ENCODE measurements at regions of chr1 and their contacts with region 1.

Region 1: GRCh38 chr1:149917571-149918144 is at the start of gene SV2A:
- DNase-seq: peak in 1 of 2 experiments; percentile 72
- H3K4me3 ChIP-seq: peak within 1 kb of the TSS; percentile 85 to 99 (median 92)
- H3K27ac ChIP-seq: no peak within 1 kb of the TSS
- H3K4me1 ChIP-seq: peaks cover 4 to 19% (median 11%) of the 10 kb centered on the region in 4 experiments
- H3K27me3 ChIP-seq: no peaks in the 10 kb centered on the region
- CTCF ChIP-seq: no peak
- EP300 ChIP-seq: peak in 1 of 2 experiments; percentile 59; a peak in 1 of 3 replicates
- POLR2A ChIP-seq: peak in 1 of 2 experiments; percentile 50; a peak in 1 of 3 replicates
- RAD21 ChIP-seq: no peak
- total RNA-seq, gene SV2A: 51.8 and 52.9 TPM in 2 replicates

Region 2: GRCh38 chr1:149927503-149928387 is 10.1 kb after region 1 on chr1 and contains the start of gene SF3B4:
- CTCF ChIA-PET with region 1: interaction called, 4 read pairs
- POLR2A ChIA-PET with region 1: interaction called, 11 read pairs
- DNase-seq: peak in 1 of 2 experiments; percentile 92
- H3K4me3 ChIP-seq: peak within 1 kb of the TSS; percentile 85 to 95 (median 94)
- H3K27ac ChIP-seq: peak within 1 kb of the TSS; percentile 90
- H3K4me1 ChIP-seq: peaks cover 0 to 8% (median 4%) of the 10 kb centered on the region in 4 experiments; a peak in 4 of 7 replicates
- H3K27me3 ChIP-seq: no peaks in the 10 kb centered on the region
- CTCF ChIP-seq: no peak
- EP300 ChIP-seq: no peak
- POLR2A ChIP-seq: peak; percentile 92 to 93
- RAD21 ChIP-seq: 0 out of 4 replicates have a peak, but pooled peaks of 1 of the 2 experiments have one; percentile 5
- total RNA-seq, gene SF3B4: 119 and 122 TPM in 2 replicates

Region 3: DNA sequence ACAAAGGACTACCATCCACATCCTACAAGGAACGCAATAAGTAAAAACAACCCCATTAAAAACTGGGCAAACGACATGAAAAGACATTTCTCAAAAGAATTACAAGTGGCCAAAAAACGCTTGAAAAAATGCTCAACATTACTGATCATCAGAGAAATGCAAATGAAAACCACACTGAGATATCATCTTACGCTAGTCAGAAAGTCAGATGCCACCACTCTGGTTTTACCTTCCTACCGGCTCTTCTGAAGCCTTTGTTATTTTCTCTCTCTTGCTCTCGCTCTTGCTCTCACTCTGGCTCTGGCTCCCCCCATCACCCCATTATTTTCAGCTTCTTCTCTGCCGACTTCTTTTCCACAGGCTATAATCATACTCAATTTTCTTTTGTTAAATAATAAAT is 188.7 kb after region 1 on chr1:
- CTCF ChIA-PET with region 1: no interaction called
- POLR2A ChIA-PET with region 1: no interaction called
- DNase-seq: no peak
- H3K4me3 ChIP-seq: no peak overlapping the region
- H3K27ac ChIP-seq: no peak overlapping the region
- H3K4me1 ChIP-seq: no peaks in the 10 kb centered on the region
- H3K27me3 ChIP-seq: no peaks in the 10 kb centered on the region
- CTCF ChIP-seq: no peak
- EP300 ChIP-seq: no peak
- POLR2A ChIP-seq: no peak
- RAD21 ChIP-seq: no peak